Activated T-helper 1 cell treated with anti-CD3 and anti-CD28 coated beads, Interleukin-12 subunit alpha, Interleukin-12 subunit beta, Interleukin-2, Interleukin-4 antibody, amounts not matched to agents 30 ng/mL and 10 ng/mL and 1 ng/mL, durations not matched to agents 14 hours and 24 hours and 36 hours (primary cell): ENCODE measurements at regions of chr14 and their contacts with region 1.

Region 1: GRCh38 chr14:67816326-67817002 is at the start of gene ZFYVE26:
- DNase-seq: peak; percentile 88
- H3K4me3 Mint-ChIP-seq: peak within 1 kb of the TSS; percentile 90
- H3K27ac Mint-ChIP-seq: peak within 1 kb of the TSS; percentile 90
- H3K4me1 Mint-ChIP-seq: peaks cover 49% of the 10 kb centered on the region
- H3K27me3 Mint-ChIP-seq: no peaks in the 10 kb centered on the region
- total RNA-seq, gene ZFYVE26: 15.2 and 20.0 TPM in 2 replicates

Region 2: GRCh38 chr14:67240978-67241414 is 575.5 kb before region 1 on chr14:
- intact Hi-C with region 1: loop called (anchors 2 kb)
- DNase-seq: peak; percentile 92
- H3K4me3 Mint-ChIP-seq: peak overlapping the region; percentile 87
- H3K27ac Mint-ChIP-seq: peak overlapping the region; percentile 80
- H3K4me1 Mint-ChIP-seq: peaks cover 18% of the 10 kb centered on the region
- H3K27me3 Mint-ChIP-seq: peaks cover 20% of the 10 kb centered on the region

Region 3: DNA sequence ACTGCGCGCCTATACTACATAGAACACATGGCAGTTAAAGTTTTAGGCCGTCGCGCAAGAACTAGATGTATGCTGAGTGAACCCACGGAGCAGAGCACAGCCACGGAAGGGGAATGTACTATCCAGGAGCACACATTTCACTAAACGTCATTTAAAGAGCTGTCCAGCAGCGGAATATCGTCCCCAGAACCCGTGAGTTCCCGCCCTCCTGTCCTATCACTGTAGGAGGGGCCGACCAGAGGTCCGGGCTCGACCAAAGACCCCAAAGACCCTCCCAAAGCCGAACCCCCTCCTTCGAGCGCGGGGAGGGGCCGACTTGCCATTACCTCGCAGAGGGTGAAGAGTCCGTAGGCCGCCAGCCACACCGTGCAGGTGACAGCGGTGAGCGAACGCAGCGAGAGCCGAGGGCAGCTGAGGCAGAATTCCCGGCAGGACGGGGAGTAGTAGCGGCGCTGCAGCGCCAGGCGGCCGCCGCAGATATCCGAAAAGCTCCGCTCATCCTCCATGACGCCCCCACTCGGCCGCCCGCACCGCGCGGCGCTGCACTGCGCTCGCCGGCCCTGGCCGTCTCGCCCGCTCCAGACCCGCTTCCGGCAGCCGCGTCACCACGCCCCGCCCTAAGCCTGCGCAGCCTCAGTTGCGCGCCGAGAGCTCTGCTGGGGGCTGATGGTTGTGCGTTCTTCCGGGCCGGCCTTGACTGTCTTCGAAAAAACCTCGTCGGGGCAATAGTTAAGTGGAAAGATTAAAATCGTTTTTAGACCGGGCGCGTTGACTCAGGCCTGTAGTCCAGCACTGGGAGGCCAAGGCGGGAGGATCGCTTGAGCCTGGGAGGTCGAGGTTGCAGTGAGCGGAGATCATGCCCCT is 216.5 kb before region 1 on chr14 and contains the start of gene PIGH:
- intact Hi-C with region 1: loop called (anchors 1 kb)
- DNase-seq: peak; percentile 92
- H3K4me3 Mint-ChIP-seq: peak within 1 kb of the TSS; percentile 99
- H3K27ac Mint-ChIP-seq: peak within 1 kb of the TSS; percentile 94
- H3K4me1 Mint-ChIP-seq: peaks cover 44% of the 10 kb centered on the region
- H3K27me3 Mint-ChIP-seq: peaks cover 18% of the 10 kb centered on the region
- total RNA-seq, gene PIGH: 22.7 and 26.0 TPM in 2 replicates

Region 4: DNA sequence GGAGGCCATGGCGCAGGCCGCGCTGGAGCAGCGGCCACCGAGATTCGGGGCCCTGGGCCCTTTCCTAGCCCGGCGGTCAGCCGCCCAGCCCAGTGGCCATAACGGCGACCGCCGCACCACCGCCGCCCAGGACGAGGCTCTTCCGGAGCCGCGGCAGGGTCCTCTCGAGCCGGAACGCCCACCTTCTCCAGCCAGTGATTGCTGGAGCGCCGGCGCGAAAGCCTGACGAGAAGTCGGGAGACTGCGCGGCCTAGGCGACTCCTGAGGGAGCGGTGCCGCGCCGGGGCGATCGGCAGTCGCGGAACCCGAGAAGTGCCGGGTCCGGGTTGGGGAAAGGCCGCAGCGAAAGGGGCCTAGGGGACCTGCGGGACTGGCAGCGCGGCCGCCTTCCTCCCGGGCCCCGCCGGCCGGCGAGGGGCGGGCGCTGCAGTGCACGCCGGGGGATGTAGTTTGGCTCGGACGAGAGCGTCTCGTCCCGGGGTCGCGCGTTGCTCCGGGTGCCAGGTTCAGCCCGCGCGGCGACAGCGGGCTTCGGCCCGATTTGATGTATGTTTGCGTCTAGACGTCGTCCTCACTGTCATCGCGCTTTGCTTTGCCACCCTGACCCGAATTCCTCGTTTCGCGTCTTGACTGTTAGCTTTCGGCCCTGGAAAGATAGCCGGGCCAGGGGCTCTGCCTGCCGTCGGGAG is 141.8 kb before region 1 on chr14 and contains the start of gene VTI1B:
- intact Hi-C with region 1: loop called (anchors 5 kb)
- DNase-seq: peak; percentile 70
- H3K4me3 Mint-ChIP-seq: peak within 1 kb of the TSS; percentile 90
- H3K27ac Mint-ChIP-seq: peak within 1 kb of the TSS; percentile 87
- H3K4me1 Mint-ChIP-seq: peaks cover 41% of the 10 kb centered on the region
- H3K27me3 Mint-ChIP-seq: no peaks in the 10 kb centered on the region
- total RNA-seq, gene VTI1B: 77.7 and 77.8 TPM in 2 replicates

Region 5: DNA sequence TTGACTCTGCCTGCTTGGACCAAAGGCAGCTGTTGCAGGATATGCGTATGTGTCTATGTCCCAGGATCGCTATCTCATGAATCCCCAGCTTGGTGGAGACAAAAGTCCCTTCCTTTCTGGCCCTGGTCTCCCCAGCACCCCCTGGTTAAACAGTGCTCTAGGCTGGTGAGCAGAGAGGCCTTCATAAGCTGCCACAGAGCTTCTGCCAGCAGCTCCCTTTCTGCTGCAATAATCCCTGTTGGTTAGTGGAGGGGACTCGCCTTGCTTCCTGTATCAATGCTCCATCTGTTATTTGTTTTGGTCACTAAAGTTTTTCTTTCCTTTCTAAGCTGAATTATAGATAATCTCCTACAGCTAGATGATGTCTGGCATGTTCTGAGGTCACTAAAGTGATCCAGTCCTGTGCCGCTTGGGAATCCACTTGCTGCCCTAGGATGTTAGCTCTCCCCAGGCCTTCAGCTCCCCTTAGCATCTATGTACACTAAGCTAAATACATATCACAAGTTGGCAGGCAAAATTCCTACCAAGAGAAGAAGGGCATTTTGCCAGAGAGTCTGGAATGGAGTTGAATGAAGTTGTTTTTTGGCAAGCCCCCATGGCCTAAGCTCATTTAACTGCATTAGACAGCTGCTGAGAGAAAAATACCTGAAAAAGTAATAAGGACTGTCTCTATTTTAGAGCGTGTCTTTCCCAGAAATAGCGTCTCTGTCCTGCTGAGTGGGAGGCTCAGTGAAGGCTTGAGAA is 67.0 kb before region 1 on chr14:
- intact Hi-C with region 1: no loop called
- DNase-seq: no peak
- H3K4me3 Mint-ChIP-seq: no peak overlapping the region
- H3K27ac Mint-ChIP-seq: no peak overlapping the region
- H3K4me1 Mint-ChIP-seq: peaks cover 13% of the 10 kb centered on the region
- H3K27me3 Mint-ChIP-seq: no peaks in the 10 kb centered on the region

Region 6: DNA sequence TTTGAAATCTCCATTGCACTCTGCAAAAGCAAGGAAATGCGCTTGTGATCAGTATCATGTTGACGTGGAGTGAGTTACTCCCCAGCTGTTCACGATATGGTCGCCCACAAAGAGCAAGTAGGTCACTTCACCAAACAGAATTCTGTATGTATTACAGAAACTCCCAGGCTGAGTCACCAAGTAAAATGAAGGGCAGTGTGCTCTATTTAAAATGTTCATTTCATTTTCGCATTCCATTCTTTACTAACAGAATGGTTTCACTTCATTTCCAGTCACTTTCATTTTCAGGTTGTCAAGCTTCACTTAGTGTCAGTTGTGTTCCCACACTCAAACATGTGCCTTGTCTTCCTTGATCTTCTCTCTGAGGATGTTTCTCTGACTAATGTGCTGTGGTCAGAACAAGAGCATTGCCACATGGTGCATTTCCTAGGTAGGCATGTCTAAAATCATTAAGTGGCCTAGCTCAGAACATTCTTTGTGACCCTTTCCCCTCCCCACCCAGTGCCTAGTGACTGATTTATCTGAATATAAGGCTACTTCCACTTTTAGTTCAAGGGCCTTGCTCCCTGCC is 394.4 kb after region 1 on chr14:
- intact Hi-C with region 1: loop called (anchors 1 kb)
- DNase-seq: peak; percentile 55
- H3K4me3 Mint-ChIP-seq: peak overlapping the region; percentile 66
- H3K27ac Mint-ChIP-seq: peak overlapping the region; percentile 73
- H3K4me1 Mint-ChIP-seq: peaks cover 49% of the 10 kb centered on the region
- H3K27me3 Mint-ChIP-seq: no peaks in the 10 kb centered on the region

Region 7: DNA sequence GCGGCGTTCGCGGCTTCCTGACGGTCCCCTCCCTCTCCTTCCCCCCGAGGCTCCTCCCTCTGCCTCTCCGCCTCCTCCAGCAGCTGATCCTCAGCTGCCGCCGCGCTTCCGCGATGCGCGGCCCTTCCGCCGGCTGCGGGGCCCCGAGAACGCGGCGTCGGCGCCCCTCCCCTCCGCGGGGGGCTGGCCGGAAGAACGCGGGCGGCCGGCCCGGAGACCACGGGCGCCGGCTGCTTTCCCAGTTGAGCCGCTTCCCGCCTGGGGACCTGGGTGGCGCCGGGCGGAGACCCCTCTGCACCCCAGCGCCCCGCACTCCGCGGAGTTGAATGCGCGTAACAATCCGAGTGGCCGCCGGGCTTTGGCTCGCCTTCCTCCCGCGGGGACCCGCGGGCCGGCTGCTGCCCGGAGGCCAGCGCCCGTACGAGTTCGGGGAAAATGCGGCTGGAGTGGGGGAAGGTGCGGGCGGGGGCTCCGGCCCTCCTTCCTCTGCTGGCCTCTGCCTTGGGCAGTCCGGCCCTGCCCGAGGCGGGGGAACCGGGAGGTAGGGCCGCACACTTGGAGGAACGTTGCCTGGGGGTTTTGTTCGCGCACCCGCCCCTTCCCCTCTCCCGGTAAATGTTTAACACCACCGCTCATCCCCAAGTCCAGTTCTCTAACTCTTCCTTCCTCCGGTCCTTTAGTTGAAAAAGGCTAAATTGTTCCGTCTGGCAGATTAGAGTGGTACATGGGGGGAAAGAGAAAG is 1336.8 kb after region 1 on chr14:
- intact Hi-C with region 1: loop called (anchors 5 kb)
- DNase-seq: peak; percentile 90
- H3K4me3 Mint-ChIP-seq: peak overlapping the region; percentile 90
- H3K27ac Mint-ChIP-seq: peak overlapping the region; percentile 92
- H3K4me1 Mint-ChIP-seq: peaks cover 33% of the 10 kb centered on the region
- H3K27me3 Mint-ChIP-seq: peaks cover 39% of the 10 kb centered on the region

Region 8: DNA sequence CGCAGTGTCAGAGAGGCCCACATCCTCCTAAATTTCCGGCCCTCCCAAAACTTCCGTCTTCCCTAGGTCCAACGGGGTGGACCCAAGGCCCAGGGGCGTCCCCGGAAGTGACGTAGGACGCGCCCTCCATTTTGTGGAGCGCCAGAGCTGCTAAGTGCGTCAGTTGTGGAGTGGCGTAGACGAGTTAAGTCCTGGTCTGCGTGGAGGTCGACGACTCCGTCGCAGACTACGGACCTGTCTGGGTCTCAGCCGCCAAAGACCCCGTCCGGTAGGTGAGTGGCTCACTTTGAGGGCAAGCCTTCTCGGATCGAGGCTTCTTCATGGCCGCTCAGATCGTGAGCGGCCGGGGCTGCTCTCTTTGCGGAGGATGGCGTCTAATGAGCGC is 1950.5 kb after region 1 on chr14 and contains the start of gene SRSF5:
- intact Hi-C with region 1: loop called (anchors 5 kb)
- DNase-seq: peak; percentile 92
- H3K4me3 Mint-ChIP-seq: peak within 1 kb of the TSS; percentile 94
- H3K27ac Mint-ChIP-seq: peak within 1 kb of the TSS; percentile 98
- H3K4me1 Mint-ChIP-seq: peaks cover 68% of the 10 kb centered on the region
- H3K27me3 Mint-ChIP-seq: peaks cover 2% of the 10 kb centered on the region
- total RNA-seq, gene SRSF5: 304 and 311 TPM in 2 replicates